Naive thymus-derived CD8-positive, alpha-beta T cell (primary cell): ENCODE measurements at regions of chr11 and their contacts with region 1.

Region 1: DNA sequence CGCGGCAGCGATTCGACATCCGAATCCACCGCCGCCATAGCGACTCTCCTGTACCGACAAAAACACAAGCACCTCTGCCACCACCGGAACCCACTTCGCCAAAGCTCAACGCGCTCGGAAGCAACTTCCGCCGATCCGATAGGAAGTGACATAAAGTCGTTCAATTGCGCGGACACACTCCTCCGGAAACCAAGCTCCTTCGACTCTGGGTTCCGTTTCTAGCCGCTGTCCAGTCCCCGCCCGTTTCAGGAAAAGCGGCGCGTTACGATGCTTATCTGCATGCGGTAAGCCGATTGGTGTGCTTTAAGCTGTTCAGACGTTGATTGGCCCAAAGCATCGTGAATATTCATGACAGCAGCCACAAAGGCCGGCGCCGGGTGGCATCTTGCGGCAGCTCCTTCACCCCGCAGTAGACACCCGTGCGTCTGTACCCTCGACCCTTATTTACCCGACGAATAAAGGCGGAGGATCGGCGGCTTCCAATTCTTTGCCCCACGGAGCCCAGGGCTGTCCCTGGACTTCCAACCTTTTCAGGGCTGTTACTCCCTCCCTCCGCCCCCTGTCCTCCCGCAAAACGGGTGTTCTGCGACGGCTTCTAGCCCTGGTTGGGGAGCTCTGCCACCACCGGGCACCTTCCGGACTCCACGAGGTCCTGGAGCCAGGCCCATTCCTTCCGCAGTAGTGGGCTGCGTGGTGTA is at the start of gene TUT1:
- DNase-seq: peak; percentile 81 to 98 (median 96)
- ATAC-seq: peak; percentile 84 to 86
- H3K4me3 Mint-ChIP-seq: peak within 1 kb of the TSS; percentile 85 to 97 (median 94)
- H3K27ac Mint-ChIP-seq: peak within 1 kb of the TSS; percentile 95 to 99 (median 98)
- H3K4me1 Mint-ChIP-seq: peaks cover 15 to 60% (median 51%) of the 10 kb centered on the region in 4 donors
- H3K27me3 Mint-ChIP-seq: peaks cover 0 to 3% (median 0%) of the 10 kb centered on the region in 5 donors
- polyA plus RNA-seq, gene TUT1: 12.8 to 24.4 (median 16.9) TPM

Region 2: GRCh38 chr11:62427630-62428233 is 163.9 kb before region 1 on chr11:
- POLR2A ChIA-PET with region 1: interaction called, 16 read pairs
- DNase-seq: no peak
- ATAC-seq: no peak
- H3K4me3 Mint-ChIP-seq: peak overlapping the region in 2 of 10 donors; percentile 26 to 63
- H3K27ac Mint-ChIP-seq: peak overlapping the region in 8 of 10 donors; percentile 53 to 90 (median 78)
- H3K4me1 Mint-ChIP-seq: peaks cover 11 to 48% (median 39%) of the 10 kb centered on the region in 4 donors
- H3K27me3 Mint-ChIP-seq: no peaks in the 10 kb centered on the region

Region 3: GRCh38 chr11:62532096-62532495 is 59.5 kb before region 1 on chr11:
- POLR2A ChIA-PET with region 1: no interaction called
- DNase-seq: no peak
- ATAC-seq: no peak
- H3K4me3 Mint-ChIP-seq: no peak overlapping the region
- H3K27ac Mint-ChIP-seq: peak overlapping the region in 1 of 10 donors; percentile 8
- H3K4me1 Mint-ChIP-seq: peaks cover 3 to 9% (median 6%) of the 10 kb centered on the region in 4 donors
- H3K27me3 Mint-ChIP-seq: no peaks in the 10 kb centered on the region

Region 4: GRCh38 chr11:62612366-62613290 is 21.0 kb after region 1 on chr11 and contains the starts of genes EML3 and ROM1:
- POLR2A ChIA-PET with region 1: interaction called, 166 read pairs
- DNase-seq: peak; percentile 79 to 94 (median 88)
- ATAC-seq: peak; percentile 74 to 78
- H3K4me3 Mint-ChIP-seq: peak within 1 kb of the TSS; percentile 91 to 98 (median 94)
- H3K27ac Mint-ChIP-seq: peak within 1 kb of the TSS; percentile 96 to 99 (median 98)
- H3K4me1 Mint-ChIP-seq: peaks cover 32 to 59% (median 57%) of the 10 kb centered on the region in 4 donors
- H3K27me3 Mint-ChIP-seq: no peaks in the 10 kb centered on the region
- polyA plus RNA-seq, gene EML3: 14.8 to 23.7 (median 15.7) TPM
- polyA plus RNA-seq, gene ROM1: 0.82 to 1.9 (median 1.8) TPM

Region 5: GRCh38 chr11:62665075-62665598 is 73.5 kb after region 1 on chr11 and contains the starts of genes C11orf98 and CSKMT:
- POLR2A ChIA-PET with region 1: interaction called, 251 read pairs
- DNase-seq: peak; percentile 89 to 98 (median 96)
- ATAC-seq: peak; percentile 89 to 91
- H3K4me3 Mint-ChIP-seq: peak within 1 kb of the TSS; percentile 94 to 98 (median 95)
- H3K27ac Mint-ChIP-seq: peak within 1 kb of the TSS; percentile 86 to 97 (median 96)
- H3K4me1 Mint-ChIP-seq: peaks cover 22 to 49% (median 42%) of the 10 kb centered on the region in 4 donors
- H3K27me3 Mint-ChIP-seq: no peaks in the 10 kb centered on the region
- polyA plus RNA-seq, gene C11orf98: 99.9 to 149 (median 117) TPM
- polyA plus RNA-seq, gene CSKMT: 1.8 to 3.7 (median 3.4) TPM

Region 6: DNA sequence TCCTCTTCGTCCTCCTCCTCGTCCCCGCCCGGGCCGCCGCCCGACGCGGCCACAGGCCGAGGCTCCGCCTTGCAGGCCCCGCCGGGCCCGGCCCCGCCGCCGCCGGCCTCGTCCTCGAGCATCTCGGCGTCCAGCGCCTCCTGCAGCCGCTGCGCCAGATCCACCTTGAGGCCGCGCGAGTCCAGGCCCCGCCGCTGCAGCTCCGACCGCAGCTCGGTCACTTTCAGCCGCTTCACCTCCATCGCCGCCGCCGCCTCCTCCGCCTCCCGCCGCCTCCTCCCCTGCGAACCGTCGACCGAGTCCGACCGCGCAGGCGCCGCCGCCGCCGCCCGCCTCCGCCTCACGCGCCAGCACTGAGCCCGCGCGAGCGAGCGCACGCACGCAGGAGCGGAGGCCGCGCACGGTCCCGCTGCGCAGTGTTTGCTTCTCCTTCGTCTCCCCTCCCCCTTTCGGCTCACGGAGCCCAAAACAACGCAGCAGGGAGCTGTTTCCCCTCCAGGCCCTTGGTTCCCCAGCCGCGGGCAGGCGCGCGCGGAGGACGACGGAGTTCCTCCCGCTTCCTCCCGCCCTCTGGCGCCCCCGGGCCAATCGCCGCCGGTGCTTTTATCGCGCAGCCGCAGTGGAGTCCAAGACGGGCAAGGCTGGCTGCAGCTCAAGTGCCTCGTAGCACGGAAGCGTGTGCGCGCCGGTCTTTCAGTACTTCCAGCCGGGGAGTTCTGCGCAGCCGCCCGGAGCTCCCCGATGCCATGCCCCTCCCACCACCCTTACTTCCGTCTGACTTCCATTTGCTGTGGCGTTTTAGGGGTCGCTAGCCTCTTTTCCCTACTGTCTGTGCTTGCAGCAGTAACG is 135.5 kb after region 1 on chr11 and contains the start of gene HNRNPUL2:
- POLR2A ChIA-PET with region 1: interaction called, 73 read pairs
- DNase-seq: peak; percentile 98 to 99 (median 99)
- ATAC-seq: peak; percentile 79 to 81
- H3K4me3 Mint-ChIP-seq: peak within 1 kb of the TSS; percentile 92 to 99 (median 96)
- H3K27ac Mint-ChIP-seq: peak within 1 kb of the TSS; percentile 90 to 100 (median 99)
- H3K4me1 Mint-ChIP-seq: peaks cover 25 to 66% (median 53%) of the 10 kb centered on the region in 4 donors
- H3K27me3 Mint-ChIP-seq: peaks cover 0 to 2% (median 0%) of the 10 kb centered on the region in 5 donors
- polyA plus RNA-seq, gene HNRNPUL2: 0.99 to 3.0 (median 1.0) TPM

Region 7: GRCh38 chr11:62841361-62842184 is 250.0 kb after region 1 on chr11:
- POLR2A ChIA-PET with region 1: interaction called, 40 read pairs
- DNase-seq: peak; percentile 54 to 94 (median 86)
- ATAC-seq: peak; percentile 57 to 61
- H3K4me3 Mint-ChIP-seq: no peak overlapping the region
- H3K27ac Mint-ChIP-seq: no peak overlapping the region
- H3K4me1 Mint-ChIP-seq: peaks cover 13 to 31% (median 25%) of the 10 kb centered on the region in 4 donors
- H3K27me3 Mint-ChIP-seq: no peaks in the 10 kb centered on the region